Ascending aorta (tissue), 2 donors: ENCODE measurements at regions of chr15 and their contacts with region 1.

Region 1: GRCh38 chr15:71780115-71780976 is 30.0 kb upstream of the NR2E3 start:
- DNase-seq: peak in 1 of 2 donors; percentile 73
- H3K4me3 ChIP-seq: peak overlapping the region; percentile 6 to 10
- H3K27ac ChIP-seq: peak overlapping the region; percentile 75 to 85
- H3K4me1 ChIP-seq: peaks cover 10 to 38% of the 10 kb centered on the region in 2 donors
- H3K27me3 ChIP-seq: no peaks in the 10 kb centered on the region
- CTCF ChIP-seq: peak; percentile 30 to 73 (median 72)

Region 2: DNA sequence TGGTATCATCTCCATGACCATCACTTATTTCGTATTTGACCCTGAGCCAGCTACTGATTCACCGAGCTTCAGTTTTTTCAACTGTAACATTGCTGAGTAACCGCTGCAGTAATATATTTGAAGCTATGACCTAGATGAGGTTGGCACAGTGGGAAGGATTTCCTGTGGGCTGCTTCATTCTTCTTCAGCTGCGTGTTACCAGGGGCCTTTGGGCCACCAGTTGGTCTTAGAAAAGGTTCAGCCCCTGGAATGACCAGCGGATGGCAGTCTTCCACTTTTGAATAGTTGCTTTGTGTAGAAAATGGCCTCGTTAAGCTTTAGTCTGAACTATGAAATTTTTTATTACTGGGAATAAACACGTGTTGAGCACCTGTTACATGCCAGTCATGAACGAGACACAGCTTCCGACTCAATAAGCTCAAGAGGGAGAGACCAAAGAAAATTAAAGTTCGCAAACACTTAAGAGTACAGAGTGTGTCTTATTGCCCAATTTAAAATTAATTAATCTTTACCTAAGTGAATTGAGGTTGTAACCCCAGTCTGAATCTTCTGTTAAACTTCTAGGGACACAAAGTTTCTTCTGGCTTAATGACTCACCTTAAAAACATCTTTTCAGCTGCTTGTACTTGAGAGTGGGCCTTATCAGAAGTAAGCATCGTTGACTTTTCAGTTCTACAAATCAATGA is 27.6 kb before region 1 on chr15:
- intact Hi-C with region 1: loop called (anchors 1 kb)
- DNase-seq: peak; percentile 33 to 90
- H3K4me3 ChIP-seq: peak overlapping the region in 1 of 2 donors; percentile 6
- H3K27ac ChIP-seq: peak overlapping the region; percentile 65 to 82
- H3K4me1 ChIP-seq: peaks cover 0 to 9% of the 10 kb centered on the region in 2 donors
- H3K27me3 ChIP-seq: no peaks in the 10 kb centered on the region
- CTCF ChIP-seq: peak; percentile 45 to 65 (median 63)

Region 3: GRCh38 chr15:71806452-71806931 is 26.1 kb after region 1 on chr15:
- intact Hi-C with region 1: no loop called
- DNase-seq: no peak
- H3K4me3 ChIP-seq: no peak overlapping the region
- H3K27ac ChIP-seq: peak overlapping the region in 1 of 2 donors; percentile 7
- H3K4me1 ChIP-seq: peaks cover 0 to 7% of the 10 kb centered on the region in 2 donors
- H3K27me3 ChIP-seq: no peaks in the 10 kb centered on the region
- CTCF ChIP-seq: no peak

Region 4: DNA sequence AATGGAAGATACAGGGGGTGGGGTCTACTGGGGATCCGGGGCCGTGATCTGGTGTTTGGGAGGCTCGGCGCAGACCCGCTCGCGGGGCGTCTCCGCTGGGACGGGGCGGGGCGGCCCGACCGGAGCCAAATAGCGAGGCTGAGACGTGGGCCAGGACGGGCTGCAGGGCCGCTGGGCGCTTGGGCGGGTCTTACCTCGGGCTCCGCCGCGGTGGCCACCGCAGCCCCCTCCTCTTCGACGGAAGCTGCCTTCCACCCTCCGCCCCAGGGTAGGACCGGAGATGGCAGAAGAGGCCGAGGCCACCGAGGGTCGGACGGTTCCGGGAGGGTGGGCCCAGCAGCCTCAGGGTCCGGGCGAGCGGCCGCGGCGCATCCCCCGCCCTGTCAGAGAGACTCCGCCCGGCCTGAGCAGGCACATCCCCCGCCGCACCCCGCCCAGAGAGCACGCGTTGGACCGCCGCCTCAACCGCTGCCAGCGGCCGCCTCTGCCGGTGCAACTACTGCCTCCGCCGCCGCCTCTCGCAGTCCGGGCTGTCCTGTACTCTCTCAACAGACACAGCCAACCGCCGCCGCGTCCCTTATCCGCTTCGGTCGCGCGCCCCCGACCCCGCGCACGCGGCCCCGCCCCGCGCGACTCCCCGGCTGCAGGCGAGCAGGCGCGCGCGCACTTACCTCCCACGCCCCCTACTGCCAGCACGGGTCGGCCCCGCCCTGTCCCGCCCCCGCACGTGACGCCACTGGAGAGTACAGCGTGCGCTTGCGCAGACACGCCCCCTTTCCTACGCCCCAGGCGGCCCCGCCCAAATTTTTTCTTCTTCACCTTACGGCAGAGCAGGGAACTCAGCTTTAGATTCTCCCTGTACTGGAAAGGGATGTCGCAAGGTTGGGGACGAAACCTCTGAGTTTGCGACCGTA is 337.4 kb after region 1 on chr15 and contains the start of gene MYO9A:
- intact Hi-C with region 1: no loop called
- DNase-seq: peak; percentile 84 to 99
- H3K4me3 ChIP-seq: peak within 1 kb of the TSS; percentile 74 to 87
- H3K27ac ChIP-seq: peak within 1 kb of the TSS; percentile 90 to 97
- H3K4me1 ChIP-seq: peaks cover 0 to 10% of the 10 kb centered on the region in 2 donors
- H3K27me3 ChIP-seq: no peaks in the 10 kb centered on the region
- CTCF ChIP-seq: no peak
- total RNA-seq, gene MYO9A: 128 TPM